ENCODE measurements at regions of chr3 and their contacts with region 1.

Region 1: DNA sequence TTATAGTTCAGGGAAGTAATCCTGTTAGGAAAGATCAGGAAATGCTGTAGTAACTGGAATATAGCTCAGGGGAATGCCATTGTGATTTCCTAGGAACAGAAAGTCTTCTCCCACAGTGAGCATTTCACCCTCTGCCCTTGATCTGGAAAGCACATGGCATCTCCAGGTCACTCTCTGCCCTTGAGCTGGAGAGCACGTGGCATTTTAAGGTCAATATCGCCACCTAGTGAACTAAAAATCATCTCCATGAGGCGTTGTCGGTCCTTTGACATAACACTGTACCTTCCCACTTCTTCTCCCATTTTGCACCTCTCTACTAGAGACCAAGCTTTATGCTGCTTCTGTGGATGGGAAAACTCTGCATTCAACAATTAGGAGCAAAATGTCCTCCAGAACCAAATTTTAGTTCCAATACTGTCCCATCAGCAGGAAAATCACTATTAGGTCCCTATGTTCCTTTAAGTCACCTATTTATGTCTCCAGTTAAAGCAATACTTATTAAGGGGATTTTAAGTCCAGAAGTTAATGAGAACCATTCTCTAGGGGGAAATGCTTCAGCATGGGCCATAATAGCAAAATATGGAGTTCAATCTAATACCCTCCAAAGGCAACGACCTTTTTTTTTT is 54.7 kb upstream of the GK5 start:
- DNase-seq: peak; percentile 54
- H3K4me3 Mint-ChIP-seq: no peak overlapping the region
- H3K27ac Mint-ChIP-seq: no peak overlapping the region
- H3K4me1 Mint-ChIP-seq: peaks cover 2% of the 10 kb centered on the region
- H3K27me3 Mint-ChIP-seq: no peaks in the 10 kb centered on the region

Region 2: DNA sequence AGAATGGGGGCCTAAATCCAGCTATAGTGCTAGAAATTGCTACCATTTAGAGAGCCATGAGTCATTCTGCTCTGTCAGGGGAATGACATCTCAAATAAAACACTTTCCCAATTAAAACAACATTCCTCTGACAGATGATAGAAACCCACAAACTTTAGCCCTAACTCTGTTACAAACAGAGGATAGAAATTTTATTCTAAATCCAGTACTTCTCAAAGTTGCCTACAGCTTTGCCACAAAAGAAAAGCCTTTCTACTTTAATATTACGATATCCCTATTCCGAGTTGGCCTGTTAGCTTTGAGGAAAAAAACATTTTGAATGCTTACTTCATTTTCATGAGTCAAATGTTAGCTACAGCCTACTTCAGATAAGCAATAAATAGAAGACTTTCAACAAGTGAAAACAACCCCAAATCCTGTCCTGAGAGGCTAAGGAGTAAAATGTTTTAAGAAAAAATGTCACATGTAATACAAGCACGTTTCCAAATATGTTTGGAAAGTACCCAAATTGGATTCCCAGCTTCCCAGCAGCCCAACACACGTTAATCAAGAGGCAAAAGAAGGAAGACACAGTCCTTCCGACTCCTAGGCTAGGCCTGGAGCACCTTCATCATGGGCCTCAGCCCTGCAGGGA is 320.0 kb before region 1 on chr3:
- CTCF ChIA-PET with region 1: interaction called, 10 read pairs
- intact Hi-C with region 1: loop called (anchors 1 kb)
- DNase-seq: no peak
- H3K4me3 Mint-ChIP-seq: no peak overlapping the region
- H3K27ac Mint-ChIP-seq: no peak overlapping the region
- H3K4me1 Mint-ChIP-seq: peaks cover 3% of the 10 kb centered on the region
- H3K27me3 Mint-ChIP-seq: no peaks in the 10 kb centered on the region

Region 3: GRCh38 chr3:142022381-142022780 is 257.7 kb before region 1 on chr3:
- CTCF ChIA-PET with region 1: interaction called, 3 read pairs
- intact Hi-C with region 1: loop called (anchors 1 kb)
- DNase-seq: peak; percentile 39
- H3K4me3 Mint-ChIP-seq: no peak overlapping the region
- H3K27ac Mint-ChIP-seq: no peak overlapping the region
- H3K4me1 Mint-ChIP-seq: peaks cover 32% of the 10 kb centered on the region
- H3K27me3 Mint-ChIP-seq: no peaks in the 10 kb centered on the region

Region 4: GRCh38 chr3:142124243-142124642 is 155.8 kb before region 1 on chr3:
- CTCF ChIA-PET with region 1: interaction called, 53 read pairs
- intact Hi-C with region 1: loop called (anchors 1 kb)
- DNase-seq: no peak
- H3K4me3 Mint-ChIP-seq: no peak overlapping the region
- H3K27ac Mint-ChIP-seq: no peak overlapping the region
- H3K4me1 Mint-ChIP-seq: peaks cover 2% of the 10 kb centered on the region
- H3K27me3 Mint-ChIP-seq: no peaks in the 10 kb centered on the region

Region 5: DNA sequence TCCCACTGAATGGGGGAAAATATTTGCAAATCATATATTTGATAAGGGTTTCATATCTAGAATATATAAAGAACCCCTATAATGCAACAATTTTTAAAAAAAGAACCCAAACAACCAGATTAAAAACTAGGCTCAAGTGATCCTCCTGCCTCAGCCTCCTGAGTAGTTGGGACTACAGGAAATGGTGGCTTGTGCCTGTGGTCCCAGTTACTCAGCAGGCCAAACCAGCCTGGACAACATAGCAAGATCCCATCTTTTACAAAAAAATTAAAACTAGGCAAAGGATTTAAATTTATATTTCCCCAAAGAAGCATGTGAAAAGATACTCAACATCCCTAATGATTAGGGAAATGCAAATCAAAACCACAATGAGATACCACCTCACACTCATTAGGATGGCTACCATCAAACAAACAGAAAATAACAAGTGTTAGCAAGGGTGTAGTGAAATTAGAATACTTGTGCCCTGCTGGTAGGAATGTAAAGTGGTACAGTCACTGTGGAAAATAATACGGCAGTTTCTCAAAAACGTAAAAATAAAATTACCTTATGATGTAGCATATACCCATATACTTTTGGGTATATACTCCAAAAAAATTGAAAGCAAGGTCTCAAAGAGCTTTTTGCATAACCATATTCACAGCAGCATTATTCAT is 150.4 kb before region 1 on chr3:
- CTCF ChIA-PET with region 1: interaction called, 53 read pairs
- intact Hi-C with region 1: loop called (anchors 1 kb)
- DNase-seq: no peak
- H3K4me3 Mint-ChIP-seq: no peak overlapping the region
- H3K27ac Mint-ChIP-seq: no peak overlapping the region
- H3K4me1 Mint-ChIP-seq: peaks cover 2% of the 10 kb centered on the region
- H3K27me3 Mint-ChIP-seq: no peaks in the 10 kb centered on the region

Region 6: GRCh38 chr3:142754494-142754893 is 474.4 kb after region 1 on chr3:
- CTCF ChIA-PET with region 1: no interaction called
- intact Hi-C with region 1: no loop called
- DNase-seq: no peak
- H3K4me3 Mint-ChIP-seq: no peak overlapping the region
- H3K27ac Mint-ChIP-seq: no peak overlapping the region
- H3K4me1 Mint-ChIP-seq: no peaks in the 10 kb centered on the region
- H3K27me3 Mint-ChIP-seq: no peaks in the 10 kb centered on the region